OCI-LY7 (cell line): ENCODE measurements at regions of chr5 and their contacts with region 1.

Region 1: DNA sequence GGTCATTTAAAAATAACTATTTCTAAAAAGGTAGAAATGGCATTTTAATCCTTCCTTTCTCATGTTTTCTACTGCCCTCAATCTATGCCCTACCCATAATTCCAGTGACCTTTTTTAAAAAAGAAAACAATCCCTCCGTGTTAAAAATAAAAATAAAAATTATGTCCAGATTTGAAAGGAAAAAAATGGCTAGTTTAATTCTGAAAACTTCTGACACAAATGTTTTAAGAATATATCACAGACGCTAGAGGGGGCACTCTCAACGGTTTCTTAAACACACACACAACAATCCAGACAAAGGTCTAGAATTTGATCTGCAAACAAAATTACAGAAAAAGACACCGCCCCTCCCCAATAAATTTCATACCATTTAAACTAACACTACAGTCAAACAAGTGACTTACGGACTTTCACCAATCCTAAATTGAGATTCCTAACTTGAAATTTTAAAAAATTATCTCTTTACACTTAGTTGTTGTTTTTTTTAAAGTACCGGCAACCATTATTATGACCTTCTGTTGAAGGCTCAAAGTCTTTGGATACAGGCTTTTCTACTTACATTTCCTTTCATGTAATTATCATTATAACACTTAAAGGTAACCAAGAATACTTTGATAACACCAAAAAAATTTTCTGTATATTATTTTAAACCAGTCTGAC is 38.2 kb downstream of the CLINT1 start:
- DNase-seq: peak; percentile 83
- H3K4me3 ChIP-seq: peak overlapping the region; percentile 3
- H3K27ac ChIP-seq: peak overlapping the region; percentile 68
- H3K4me1 ChIP-seq: peaks cover 79% of the 10 kb centered on the region
- CTCF ChIP-seq: peak; percentile 97

Region 2: DNA sequence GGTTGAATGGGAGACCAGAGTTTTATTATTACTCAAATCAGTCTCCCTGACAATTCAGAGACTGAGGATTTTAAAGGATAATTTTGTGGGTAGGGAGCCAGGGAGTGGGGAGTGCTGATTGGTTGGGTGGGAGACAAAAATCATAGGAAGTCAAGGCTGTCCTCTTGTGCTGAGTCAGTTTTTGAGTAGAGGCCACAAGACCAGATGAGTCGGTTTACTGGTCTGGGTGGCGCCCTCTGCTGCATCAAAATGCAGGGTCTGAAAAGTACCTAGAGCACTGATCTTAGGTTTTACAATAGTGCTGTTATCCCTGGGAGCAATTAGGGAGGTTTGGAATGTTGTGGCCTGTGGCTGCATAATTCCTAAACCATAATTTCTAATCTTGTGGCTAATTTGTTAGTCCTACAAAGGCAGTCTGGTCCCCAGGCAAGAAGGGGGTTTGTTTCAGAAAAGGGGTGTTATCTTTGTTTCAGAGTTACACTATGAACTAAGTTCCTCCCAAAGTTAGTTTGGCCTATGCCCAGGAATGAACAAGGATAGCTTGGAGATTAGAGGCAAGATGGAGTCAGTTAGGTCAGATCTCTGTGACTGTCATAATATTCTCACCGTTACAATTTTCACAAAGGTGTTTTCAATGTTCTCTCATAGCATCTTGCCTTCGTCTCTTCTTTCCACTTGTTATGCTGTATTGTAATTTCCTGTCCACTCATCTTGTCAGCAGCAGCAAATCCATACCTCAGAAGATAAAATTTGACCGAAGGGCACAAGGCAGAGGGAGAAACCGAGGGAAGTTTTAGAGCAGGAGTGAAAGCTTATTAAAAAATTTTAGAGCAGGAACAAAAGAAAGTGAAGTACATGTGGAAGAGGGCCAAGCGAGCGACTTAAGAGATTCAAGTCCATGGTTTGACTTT is 97.4 kb after region 1 on chr5:
- CTCF ChIA-PET with region 1: interaction called, 3 read pairs
- POLR2A ChIA-PET with region 1: interaction called, 7 read pairs
- intact Hi-C with region 1: loop called (anchors 1 kb)
- DNase-seq: peak; percentile 84
- H3K4me3 ChIP-seq: no peak overlapping the region
- H3K27ac ChIP-seq: peak overlapping the region; percentile 31
- H3K4me1 ChIP-seq: peaks cover 70% of the 10 kb centered on the region
- CTCF ChIP-seq: peak; percentile 90

Region 3: DNA sequence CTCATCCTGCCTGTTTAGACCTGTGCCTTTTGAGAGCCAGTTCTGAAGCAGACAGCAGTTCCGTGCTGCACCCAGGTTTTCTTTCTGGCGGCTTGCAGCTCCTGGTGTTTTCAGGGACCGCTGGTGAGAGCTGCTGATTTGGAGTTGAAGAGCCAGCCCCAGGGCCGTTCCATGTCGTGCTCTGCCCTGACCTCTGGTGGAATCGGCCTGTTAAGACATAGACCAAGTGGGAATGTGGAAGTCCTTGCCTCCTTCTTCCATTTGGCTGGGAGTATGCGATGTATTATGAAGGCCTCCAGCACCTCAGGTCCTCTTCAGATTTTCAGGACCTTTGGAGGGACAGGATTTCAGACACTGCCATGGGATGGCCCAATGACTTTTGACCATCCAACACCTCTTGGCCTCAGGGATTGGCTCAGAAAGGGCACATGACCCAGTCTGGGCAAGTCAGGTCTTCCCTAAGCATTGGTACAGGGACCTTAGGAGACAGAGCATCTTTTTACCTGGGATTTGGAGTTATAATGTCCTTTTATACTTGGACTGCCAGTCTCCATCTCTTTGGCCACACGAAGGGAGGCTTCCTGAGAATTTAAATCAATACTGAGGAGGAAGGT is 174.3 kb after region 1 on chr5:
- CTCF ChIA-PET with region 1: no interaction called
- POLR2A ChIA-PET with region 1: no interaction called
- intact Hi-C with region 1: loop called (anchors 1 kb)
- DNase-seq: peak; percentile 74
- H3K4me3 ChIP-seq: no peak overlapping the region
- H3K27ac ChIP-seq: no peak overlapping the region
- H3K4me1 ChIP-seq: no peaks in the 10 kb centered on the region
- CTCF ChIP-seq: peak; percentile 90